ENCODE measurements at regions of chr14 and their contacts with region 1.

Region 1: GRCh38 chr14:57293866-57294837 is 25.4 kb downstream of the AP5M1 start:
- DNase-seq: peak; percentile 53
- ATAC-seq: peak; percentile 50
- H3K4me3 ChIP-seq: no peak overlapping the region
- H3K27ac ChIP-seq: no peak overlapping the region
- H3K4me1 ChIP-seq: peaks cover 6% of the 10 kb centered on the region
- H3K27me3 ChIP-seq: no peaks in the 10 kb centered on the region
- CTCF ChIP-seq: peak; percentile 68

Region 2: DNA sequence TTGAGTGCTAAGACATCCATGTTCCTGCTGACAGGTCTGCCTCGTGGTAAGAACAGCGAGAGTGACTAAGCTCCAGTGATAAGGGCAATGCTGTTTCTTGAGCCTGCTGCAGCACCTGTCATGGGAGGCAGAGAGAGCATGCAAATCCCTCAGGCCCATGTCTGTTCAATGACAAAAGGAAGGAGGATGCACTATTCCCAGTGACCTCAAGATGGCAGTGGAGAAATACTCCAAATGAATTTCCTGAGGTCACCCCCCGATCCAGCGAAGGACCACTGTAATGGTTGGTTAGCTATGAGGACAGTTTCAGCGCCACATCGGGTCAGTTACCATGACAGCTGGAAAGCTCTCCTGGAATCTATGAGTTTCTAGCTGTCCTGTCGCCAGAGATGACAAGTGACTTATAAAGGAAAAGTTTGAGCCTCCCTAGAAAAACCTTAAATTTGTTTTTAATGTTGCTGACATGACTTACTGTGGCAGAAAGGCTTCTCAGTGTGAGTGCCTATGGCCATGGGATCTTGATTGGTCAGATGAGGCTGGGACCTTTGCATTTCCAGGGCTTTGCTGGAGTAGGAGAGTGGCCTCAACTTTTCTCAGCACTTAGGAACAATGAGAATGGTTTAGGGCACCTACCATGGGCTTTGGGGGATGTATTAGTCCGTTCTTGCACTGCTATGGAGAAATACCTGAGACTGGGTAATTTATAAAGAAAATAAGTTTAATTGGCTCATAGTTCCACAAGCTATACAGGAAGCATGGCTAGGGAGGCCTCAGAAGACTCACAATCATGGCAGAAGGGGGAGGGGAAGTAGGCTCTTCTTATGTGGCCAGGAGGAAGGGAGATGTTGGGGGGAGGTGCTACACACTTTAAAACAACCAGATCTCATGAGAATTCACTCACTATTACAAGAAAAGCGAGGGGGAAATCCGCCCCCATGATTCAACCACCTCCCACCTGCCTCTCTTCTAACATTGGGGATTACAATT is 802.6 kb before region 1 on chr14:
- CTCF ChIA-PET with region 1: interaction called, 3 read pairs
- POLR2A ChIA-PET with region 1: no interaction called
- intact Hi-C with region 1: loop called (anchors 2 kb)
- DNase-seq: peak; percentile 87
- ATAC-seq: peak; percentile 72
- H3K4me3 ChIP-seq: no peak overlapping the region
- H3K27ac ChIP-seq: no peak overlapping the region
- H3K4me1 ChIP-seq: no peaks in the 10 kb centered on the region
- H3K27me3 ChIP-seq: peaks cover 45% of the 10 kb centered on the region
- CTCF ChIP-seq: peak; percentile 97

Region 3: DNA sequence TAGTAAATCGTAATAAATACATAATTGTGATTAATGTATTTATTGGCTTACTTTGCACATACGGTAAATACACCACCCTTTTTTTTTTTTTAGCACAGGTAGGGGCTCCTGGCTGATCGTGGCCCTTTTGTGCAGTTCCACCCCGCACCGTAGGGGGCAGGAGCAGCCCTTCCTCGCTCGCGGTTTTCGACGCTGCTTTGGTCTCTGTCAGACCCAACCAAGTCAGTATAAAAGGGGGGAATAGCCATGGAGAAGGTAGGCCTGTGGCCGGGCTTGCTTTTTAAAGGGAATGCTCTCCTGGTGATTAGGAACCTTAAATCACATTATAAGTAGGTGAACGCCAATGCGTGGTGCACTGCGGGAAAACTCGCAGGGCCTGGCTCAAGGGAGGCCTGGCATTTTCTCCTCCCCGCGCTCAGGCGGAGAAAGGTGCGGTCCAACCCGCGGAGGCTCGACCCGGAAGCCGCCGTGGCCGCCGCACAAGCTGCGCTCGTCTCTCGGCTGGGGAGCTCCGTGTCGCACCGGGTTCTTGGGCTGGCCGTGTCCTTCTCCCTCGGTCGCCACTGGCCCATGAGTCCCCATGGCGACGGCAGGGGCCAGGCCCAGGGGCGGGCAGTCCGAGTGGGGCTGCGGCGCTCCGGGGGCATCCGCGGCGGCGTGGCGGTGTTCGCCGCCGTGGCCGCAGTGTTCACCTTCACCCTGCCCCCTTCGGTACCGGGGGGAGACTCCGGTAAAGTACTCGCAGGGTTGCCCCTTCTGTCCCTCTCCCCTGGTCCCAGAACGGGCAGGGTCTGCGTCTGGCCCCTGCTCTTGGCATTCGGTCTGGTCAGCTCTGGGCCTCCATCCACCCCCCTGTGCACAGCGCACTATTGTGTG is 714.6 kb before region 1 on chr14 and contains the start of gene TMEM260:
- CTCF ChIA-PET with region 1: no interaction called
- POLR2A ChIA-PET with region 1: no interaction called
- intact Hi-C with region 1: loop called (anchors 10 kb)
- DNase-seq: peak; percentile 98
- ATAC-seq: peak; percentile 78
- H3K4me3 ChIP-seq: peak within 1 kb of the TSS; percentile 81
- H3K27ac ChIP-seq: peak within 1 kb of the TSS; percentile 61
- H3K4me1 ChIP-seq: peaks cover 42% of the 10 kb centered on the region
- H3K27me3 ChIP-seq: peaks cover 28% of the 10 kb centered on the region; the same call in 1 of the 2 replicates
- CTCF ChIP-seq: peak; percentile 98
- total RNA-seq, gene TMEM260: 17.8 and 28.6 TPM in 2 replicates

Region 4: DNA sequence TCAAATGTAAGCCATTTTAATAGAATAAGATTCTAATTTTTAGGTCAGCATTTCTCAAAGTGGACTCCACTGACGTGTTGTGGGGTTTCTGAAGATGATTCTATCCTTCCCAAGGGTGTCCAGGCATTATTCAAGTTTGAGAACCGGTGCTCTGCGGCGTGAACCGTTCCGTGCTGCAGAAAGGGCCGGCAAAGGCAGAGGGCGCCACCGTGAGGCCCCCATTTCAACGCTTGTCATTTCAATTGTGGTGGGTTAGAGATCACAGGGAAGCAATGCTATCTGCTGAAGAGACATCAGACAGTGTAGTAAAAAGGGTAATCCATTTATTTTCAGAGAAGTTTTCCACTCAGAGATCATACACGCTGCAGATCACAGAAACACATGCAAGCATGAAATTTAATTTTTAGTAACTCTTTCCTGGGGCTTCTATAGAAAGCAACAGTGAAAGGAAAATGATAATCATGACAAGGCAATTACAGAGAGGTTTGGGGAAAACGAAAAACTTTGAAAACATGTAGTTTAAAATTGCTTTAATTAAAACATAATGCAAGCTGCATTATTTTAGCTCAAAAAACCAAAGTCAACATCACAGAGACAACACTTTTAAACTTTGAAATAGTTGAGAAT is 227.2 kb before region 1 on chr14:
- CTCF ChIA-PET with region 1: no interaction called
- POLR2A ChIA-PET with region 1: no interaction called
- intact Hi-C with region 1: loop called (anchors 2 kb)
- DNase-seq: peak; percentile 79
- ATAC-seq: peak; percentile 94
- H3K4me3 ChIP-seq: no peak overlapping the region
- H3K27ac ChIP-seq: no peak overlapping the region
- H3K4me1 ChIP-seq: no peaks in the 10 kb centered on the region
- H3K27me3 ChIP-seq: peaks cover 88% of the 10 kb centered on the region
- CTCF ChIP-seq: peak; percentile 99

Region 5: DNA sequence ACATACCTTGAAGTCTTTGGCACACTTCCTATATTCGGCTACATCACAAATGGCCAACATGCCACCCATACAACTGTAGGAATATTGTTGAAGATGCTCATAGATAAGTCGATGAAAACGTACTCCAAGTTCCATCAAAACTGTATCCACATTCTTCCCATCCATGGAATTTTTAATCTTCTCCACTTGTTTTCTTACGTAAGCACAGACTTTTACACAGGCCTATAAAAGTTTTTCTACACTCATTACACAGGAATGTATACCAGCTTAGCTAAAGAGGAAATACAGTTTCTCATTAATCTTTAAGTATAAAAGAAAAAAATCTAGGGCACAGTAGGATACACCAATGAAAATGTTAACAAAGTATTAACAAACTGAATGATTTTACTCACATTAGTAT is 84.6 kb before region 1 on chr14:
- CTCF ChIA-PET with region 1: no interaction called
- POLR2A ChIA-PET with region 1: no interaction called
- intact Hi-C with region 1: loop called (anchors 2 kb)
- DNase-seq: peak; percentile 73
- ATAC-seq: peak; percentile 97
- H3K4me3 ChIP-seq: no peak overlapping the region
- H3K27ac ChIP-seq: no peak overlapping the region
- H3K4me1 ChIP-seq: peaks cover 3% of the 10 kb centered on the region; the same call in 1 of the 2 replicates
- H3K27me3 ChIP-seq: no peaks in the 10 kb centered on the region
- CTCF ChIP-seq: no peak

Region 6: GRCh38 chr14:57254884-57255283 is 39.3 kb before region 1 on chr14:
- CTCF ChIA-PET with region 1: no interaction called
- POLR2A ChIA-PET with region 1: no interaction called
- intact Hi-C with region 1: no loop called
- DNase-seq: no peak
- ATAC-seq: no peak
- H3K4me3 ChIP-seq: no peak overlapping the region
- H3K27ac ChIP-seq: no peak overlapping the region
- H3K4me1 ChIP-seq: peaks cover 4% of the 10 kb centered on the region; the same call in 1 of the 2 replicates
- H3K27me3 ChIP-seq: no peaks in the 10 kb centered on the region
- CTCF ChIP-seq: no peak

Region 7: GRCh38 chr14:57317316-57317715 is 23.2 kb after region 1 on chr14:
- CTCF ChIA-PET with region 1: no interaction called
- POLR2A ChIA-PET with region 1: no interaction called
- intact Hi-C with region 1: loop called (anchors 1 kb)
- DNase-seq: peak; percentile 99
- ATAC-seq: peak; percentile 89
- H3K4me3 ChIP-seq: no peak overlapping the region
- H3K27ac ChIP-seq: no peak overlapping the region
- H3K4me1 ChIP-seq: no peaks in the 10 kb centered on the region
- H3K27me3 ChIP-seq: peaks cover 44% of the 10 kb centered on the region
- CTCF ChIP-seq: peak; percentile 100

Region 8: DNA sequence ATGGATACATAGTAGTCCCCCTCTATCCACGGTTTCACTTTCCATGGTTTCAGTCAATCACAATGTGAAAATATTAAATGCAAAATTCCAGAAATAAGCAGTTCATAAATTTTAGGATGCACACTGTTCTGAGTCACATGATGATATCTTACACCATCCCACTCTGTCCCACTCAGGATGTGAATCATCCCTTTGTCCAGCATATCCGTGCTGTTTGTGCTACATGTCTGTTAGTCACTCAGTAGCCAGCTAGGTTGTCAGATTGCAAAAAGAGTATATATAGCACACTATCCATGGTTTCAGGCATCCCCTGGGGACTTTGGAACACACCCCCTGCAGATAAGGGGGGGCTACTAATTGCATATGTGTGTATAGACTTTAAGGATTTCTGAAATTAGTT is 88.1 kb after region 1 on chr14:
- CTCF ChIA-PET with region 1: interaction called, 11 read pairs
- POLR2A ChIA-PET with region 1: no interaction called
- intact Hi-C with region 1: loop called (anchors 1 kb)
- DNase-seq: peak; percentile 99
- ATAC-seq: peak; percentile 99
- H3K4me3 ChIP-seq: no peak overlapping the region
- H3K27ac ChIP-seq: peak overlapping the region; percentile 45
- H3K4me1 ChIP-seq: peaks cover 33% of the 10 kb centered on the region
- H3K27me3 ChIP-seq: no peaks in the 10 kb centered on the region
- CTCF ChIP-seq: no peak